Ascending aorta (tissue), 2 donors: ENCODE measurements at regions of chr4 and their contacts with region 1.

Region 1: GRCh38 chr4:68375667-68376559 is 26.0 kb upstream of the YTHDC1 start:
- DNase-seq: peak in 1 of 2 donors; percentile 64
- H3K4me3 ChIP-seq: no peak overlapping the region
- H3K27ac ChIP-seq: no peak overlapping the region
- H3K4me1 ChIP-seq: no peaks in the 10 kb centered on the region
- H3K27me3 ChIP-seq: no peaks in the 10 kb centered on the region
- CTCF ChIP-seq: peak; percentile 61 to 87 (median 71)

Region 2: GRCh38 chr4:67700738-67701516 is 675.0 kb before region 1 on chr4 and contains the start of gene UBA6:
- intact Hi-C with region 1: loop called (anchors 10 kb)
- DNase-seq: peak; percentile 87 to 98
- H3K4me3 ChIP-seq: peak within 1 kb of the TSS; percentile 77 to 93
- H3K27ac ChIP-seq: peak within 1 kb of the TSS; percentile 94
- H3K4me1 ChIP-seq: peaks cover 0 to 3% of the 10 kb centered on the region in 2 donors
- H3K27me3 ChIP-seq: no peaks in the 10 kb centered on the region
- CTCF ChIP-seq: peak in 2 of 3 experiments; percentile 10 to 39
- total RNA-seq, gene UBA6: 5.1 TPM

Region 3: DNA sequence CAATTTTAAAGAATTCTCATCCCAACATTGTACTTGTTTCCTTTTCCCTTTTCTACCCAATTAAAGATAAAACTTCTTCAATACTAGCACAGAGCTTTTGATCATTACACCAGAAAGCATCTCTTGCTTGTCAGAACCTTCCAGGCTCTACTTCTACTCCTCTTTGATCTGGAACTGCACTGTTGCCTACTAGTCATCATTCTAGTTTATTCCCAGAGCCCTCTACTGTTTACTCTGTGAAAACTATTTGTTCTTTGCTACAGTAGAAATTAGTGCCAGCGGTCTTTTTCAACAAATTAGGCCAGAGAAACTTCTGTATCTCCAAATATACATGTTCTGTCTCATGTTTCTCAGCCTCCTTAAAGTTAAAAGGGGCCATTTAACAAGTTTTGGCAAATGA is 199.4 kb before region 1 on chr4:
- intact Hi-C with region 1: no loop called
- DNase-seq: no peak
- H3K4me3 ChIP-seq: no peak overlapping the region
- H3K27ac ChIP-seq: no peak overlapping the region
- H3K4me1 ChIP-seq: no peaks in the 10 kb centered on the region
- H3K27me3 ChIP-seq: no peaks in the 10 kb centered on the region
- CTCF ChIP-seq: no peak

Region 4: GRCh38 chr4:68228568-68228967 is 147.3 kb before region 1 on chr4:
- intact Hi-C with region 1: no loop called
- DNase-seq: no peak
- H3K4me3 ChIP-seq: no peak overlapping the region
- H3K27ac ChIP-seq: no peak overlapping the region
- H3K4me1 ChIP-seq: no peaks in the 10 kb centered on the region
- H3K27me3 ChIP-seq: no peaks in the 10 kb centered on the region
- CTCF ChIP-seq: no peak

Region 5: GRCh38 chr4:68271851-68272756 is 103.8 kb before region 1 on chr4:
- intact Hi-C with region 1: loop called (anchors 1 kb)
- DNase-seq: no peak
- H3K4me3 ChIP-seq: peak overlapping the region; percentile 47 to 50
- H3K27ac ChIP-seq: no peak overlapping the region
- H3K4me1 ChIP-seq: no peaks in the 10 kb centered on the region
- H3K27me3 ChIP-seq: no peaks in the 10 kb centered on the region
- CTCF ChIP-seq: peak; percentile 54 to 74 (median 67)

Region 6: DNA sequence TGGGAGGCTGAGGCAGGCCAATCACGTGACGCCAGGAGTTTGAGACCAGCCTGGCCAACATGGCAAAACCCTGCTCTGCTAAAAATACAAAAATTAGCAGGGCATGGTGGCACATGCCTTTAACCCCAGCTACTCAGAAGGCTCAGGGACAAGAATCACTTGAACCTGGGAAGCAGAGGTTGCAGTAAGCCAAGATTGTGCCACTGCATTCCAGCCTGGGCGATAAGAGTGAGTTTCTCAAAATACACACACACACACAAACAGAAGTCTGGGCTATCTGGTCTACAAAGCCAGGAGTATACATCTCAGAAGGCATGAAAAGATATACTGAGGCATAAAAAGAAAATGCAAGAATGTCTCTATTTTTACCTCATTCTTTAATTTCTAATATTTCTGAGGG is 37.3 kb before region 1 on chr4:
- intact Hi-C with region 1: loop called (anchors 5 kb)
- DNase-seq: no peak
- H3K4me3 ChIP-seq: no peak overlapping the region
- H3K27ac ChIP-seq: no peak overlapping the region
- H3K4me1 ChIP-seq: peaks cover 0 to 46% of the 10 kb centered on the region in 2 donors
- H3K27me3 ChIP-seq: no peaks in the 10 kb centered on the region
- CTCF ChIP-seq: no peak

Region 7: DNA sequence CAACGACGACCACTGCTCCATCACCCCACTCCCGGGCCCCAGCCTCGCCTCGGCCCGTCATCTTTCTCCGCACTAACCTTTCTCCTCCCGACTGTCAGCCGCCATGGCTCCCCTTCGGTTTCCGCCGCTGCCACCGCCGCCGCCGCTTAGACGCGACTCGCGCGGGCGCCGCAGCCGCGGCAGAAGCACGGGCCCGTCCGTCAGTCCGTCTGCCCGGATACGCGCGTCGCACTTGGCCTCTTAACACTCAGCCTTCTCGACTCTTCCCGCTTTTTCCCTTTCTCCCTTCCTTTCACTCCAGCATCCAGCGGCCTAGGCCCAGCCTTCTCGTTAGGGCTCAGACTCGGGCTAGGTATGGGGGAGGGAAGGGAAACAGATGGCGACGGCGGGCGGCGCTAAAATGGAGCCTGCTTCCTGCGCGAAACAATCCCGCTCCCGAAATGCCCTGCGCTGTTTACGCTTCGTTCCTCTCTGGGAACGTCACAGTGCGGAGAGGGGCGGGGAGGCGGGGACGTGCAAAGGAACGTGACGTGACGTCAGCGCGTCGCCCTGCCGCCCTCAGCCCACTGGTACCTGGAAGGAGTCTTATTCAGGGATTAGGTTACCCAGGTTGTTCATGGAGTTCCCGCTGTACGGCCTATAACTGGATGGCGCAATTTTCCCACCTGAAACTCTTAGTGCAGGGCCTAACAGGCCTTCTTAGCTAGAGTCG is 26.1 kb before region 1 on chr4 and contains the start of gene YTHDC1:
- intact Hi-C with region 1: loop called (anchors 1 kb)
- DNase-seq: peak; percentile 88 to 98
- H3K4me3 ChIP-seq: peak within 1 kb of the TSS; percentile 88 to 89
- H3K27ac ChIP-seq: peak within 1 kb of the TSS; percentile 97 to 98
- H3K4me1 ChIP-seq: peaks cover 0 to 18% of the 10 kb centered on the region in 2 donors
- H3K27me3 ChIP-seq: no peaks in the 10 kb centered on the region
- CTCF ChIP-seq: no peak
- total RNA-seq, gene YTHDC1: 17.6 TPM